CD4-positive, alpha-beta memory T cell (primary cell): ENCODE measurements at regions of chr17 and their contacts with region 1.

Region 1: DNA sequence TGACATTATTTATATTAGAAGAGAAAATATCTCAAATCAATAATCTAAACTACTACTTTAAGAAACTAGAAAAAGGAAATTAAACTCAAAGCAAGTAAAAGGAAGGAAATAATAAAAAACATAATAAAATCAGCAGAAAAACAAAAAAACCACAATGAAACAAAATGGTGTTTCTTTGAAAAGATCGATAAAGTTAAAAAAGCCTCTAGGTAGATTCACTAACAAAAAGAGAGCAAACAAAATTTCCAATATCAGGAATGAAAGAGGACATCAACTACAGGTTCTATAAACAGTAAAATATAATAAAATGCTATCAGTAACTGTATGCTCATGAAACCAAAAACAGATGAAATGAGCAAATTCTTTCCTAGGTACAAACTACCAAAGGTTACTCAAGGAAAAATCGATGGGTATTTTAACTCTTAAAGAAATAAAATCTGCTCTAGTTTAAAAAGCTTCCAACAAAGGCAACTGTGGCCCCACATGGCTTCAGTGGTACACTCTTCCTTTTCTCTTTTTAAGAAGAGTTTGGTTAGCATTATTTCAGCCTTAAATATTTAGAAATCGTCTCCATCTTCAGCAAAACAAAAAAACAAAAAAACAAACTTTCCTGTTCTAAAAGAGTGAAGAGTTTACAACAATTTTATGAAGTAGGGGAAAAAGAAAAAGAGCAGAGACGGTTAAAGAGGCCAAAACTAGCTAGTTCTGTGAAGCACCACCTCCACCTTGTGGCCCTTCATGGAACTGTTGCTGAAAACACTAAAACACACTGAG is 102.2 kb downstream of the TRIM37 start:
- DNase-seq: peak; percentile 57 to 68 (median 62)
- H3K4me3 ChIP-seq: no peak overlapping the region
- H3K4me3 Mint-ChIP-seq: peak overlapping the region in 2 of 8 donors; percentile 20 to 28
- H3K27ac ChIP-seq: no peak overlapping the region
- H3K27ac Mint-ChIP-seq: peak overlapping the region; percentile 49 to 91 (median 67)
- H3K4me1 ChIP-seq: peaks cover 6% of the 10 kb centered on the region
- H3K4me1 Mint-ChIP-seq: peaks cover 9 to 17% (median 13%) of the 10 kb centered on the region in 4 donors
- H3K27me3 ChIP-seq: no peaks in the 10 kb centered on the region
- H3K27me3 Mint-ChIP-seq: no peaks in the 10 kb centered on the region

Region 2: GRCh38 chr17:58200017-58200633 is 804.4 kb before region 1 on chr17:
- CTCF ChIA-PET with region 1: no interaction called
- POLR2A ChIA-PET with region 1: no interaction called
- intact Hi-C with region 1: loop called (anchors 2 kb)
- DNase-seq: peak in 4 of 5 donors; percentile 26 to 44 (median 39)
- H3K4me3 ChIP-seq: no peak overlapping the region
- H3K4me3 Mint-ChIP-seq: no peak overlapping the region
- H3K27ac ChIP-seq: no peak overlapping the region
- H3K27ac Mint-ChIP-seq: peak overlapping the region in 1 of 7 donors; percentile 63
- H3K4me1 ChIP-seq: no peaks in the 10 kb centered on the region
- H3K4me1 Mint-ChIP-seq: peaks cover 0 to 5% (median 1%) of the 10 kb centered on the region in 4 donors
- H3K27me3 ChIP-seq: no peaks in the 10 kb centered on the region
- H3K27me3 Mint-ChIP-seq: peaks cover 11 to 12% of the 10 kb centered on the region in 2 donors

Region 3: DNA sequence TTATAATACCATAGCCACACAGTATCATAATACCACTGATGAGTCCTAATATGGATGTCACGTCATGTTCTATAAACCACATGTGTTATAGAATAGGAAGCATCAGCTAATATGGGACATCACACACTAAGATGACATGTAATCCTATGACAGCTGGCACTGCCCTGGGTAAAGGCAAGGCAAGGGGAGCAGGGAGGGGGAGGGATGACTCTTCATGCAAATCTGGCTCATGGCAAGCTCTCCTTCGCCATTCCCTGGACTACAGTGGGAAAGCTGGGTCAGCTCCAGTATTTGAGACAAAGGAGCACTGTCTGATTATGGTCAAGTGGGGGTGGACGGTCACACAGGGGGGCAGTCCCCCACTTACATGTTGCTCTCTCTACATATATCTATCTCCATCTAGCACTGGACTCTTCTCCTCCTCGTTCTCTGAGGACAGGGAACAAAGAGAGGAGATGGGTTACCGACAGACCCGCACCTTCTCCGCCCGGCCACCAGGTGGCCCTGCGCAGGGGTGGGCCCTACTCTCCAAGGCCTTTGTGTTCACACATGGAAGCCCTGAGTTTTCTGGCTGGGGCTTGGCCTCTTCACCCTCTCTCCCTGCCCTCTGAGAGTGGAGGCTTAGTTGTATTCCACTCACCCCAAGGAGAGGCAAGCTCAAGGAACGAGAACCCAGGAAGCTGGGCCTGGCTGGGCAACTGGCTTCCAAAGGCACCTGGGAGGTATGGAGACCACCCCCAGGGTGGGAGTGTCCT is 700.4 kb before region 1 on chr17:
- CTCF ChIA-PET with region 1: no interaction called
- POLR2A ChIA-PET with region 1: no interaction called
- intact Hi-C with region 1: loop called (anchors 5 kb)
- DNase-seq: peak in 4 of 5 donors; percentile 59 to 65 (median 62)
- H3K4me3 ChIP-seq: no peak overlapping the region
- H3K4me3 Mint-ChIP-seq: no peak overlapping the region
- H3K27ac ChIP-seq: no peak overlapping the region
- H3K27ac Mint-ChIP-seq: peak overlapping the region in 4 of 7 donors; percentile 0 to 70 (median 44)
- H3K4me1 ChIP-seq: peaks cover 4% of the 10 kb centered on the region
- H3K4me1 Mint-ChIP-seq: peaks cover 4 to 10% (median 5%) of the 10 kb centered on the region in 4 donors
- H3K27me3 ChIP-seq: no peaks in the 10 kb centered on the region
- H3K27me3 Mint-ChIP-seq: no peaks in the 10 kb centered on the region

Region 4: GRCh38 chr17:58587702-58588254 is 416.7 kb before region 1 on chr17:
- CTCF ChIA-PET with region 1: interaction called, 50 read pairs
- POLR2A ChIA-PET with region 1: interaction called, 3 read pairs
- intact Hi-C with region 1: loop called (anchors 1 kb)
- DNase-seq: peak; percentile 46 to 54 (median 48)
- H3K4me3 ChIP-seq: no peak overlapping the region
- H3K4me3 Mint-ChIP-seq: no peak overlapping the region
- H3K27ac ChIP-seq: no peak overlapping the region
- H3K27ac Mint-ChIP-seq: no peak overlapping the region
- H3K4me1 ChIP-seq: no peaks in the 10 kb centered on the region
- H3K4me1 Mint-ChIP-seq: peaks cover 0 to 4% (median 2%) of the 10 kb centered on the region in 4 donors
- H3K27me3 ChIP-seq: no peaks in the 10 kb centered on the region
- H3K27me3 Mint-ChIP-seq: peaks cover 0 to 2% of the 10 kb centered on the region in 2 donors

Region 5: DNA sequence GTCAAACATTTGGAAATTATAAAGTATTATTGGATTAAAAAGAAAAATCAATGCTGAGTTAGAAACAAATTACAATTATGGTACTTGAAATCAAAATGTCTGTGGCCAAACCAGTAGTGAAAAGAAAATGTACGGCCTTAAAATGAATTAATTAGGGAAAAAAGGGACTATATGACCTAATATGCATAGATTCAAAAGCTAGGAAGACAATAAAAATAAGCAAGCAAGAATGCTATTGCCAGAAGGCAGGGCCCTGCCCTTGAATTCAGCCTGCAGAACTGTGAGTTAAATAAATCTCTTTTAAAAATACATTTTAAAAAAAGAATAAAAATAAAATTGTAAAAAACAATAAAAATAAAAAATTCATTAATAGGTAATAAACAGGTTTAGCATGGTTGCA is 13.5 kb after region 1 on chr17:
- CTCF ChIA-PET with region 1: interaction called, 10 read pairs
- POLR2A ChIA-PET with region 1: no interaction called
- intact Hi-C with region 1: no loop called
- DNase-seq: no peak
- H3K4me3 ChIP-seq: no peak overlapping the region
- H3K4me3 Mint-ChIP-seq: no peak overlapping the region
- H3K27ac ChIP-seq: no peak overlapping the region
- H3K27ac Mint-ChIP-seq: peak overlapping the region in 1 of 7 donors; percentile 55
- H3K4me1 ChIP-seq: no peaks in the 10 kb centered on the region
- H3K4me1 Mint-ChIP-seq: peaks cover 0 to 1% (median 0%) of the 10 kb centered on the region in 4 donors
- H3K27me3 ChIP-seq: no peaks in the 10 kb centered on the region
- H3K27me3 Mint-ChIP-seq: no peaks in the 10 kb centered on the region

Region 6: DNA sequence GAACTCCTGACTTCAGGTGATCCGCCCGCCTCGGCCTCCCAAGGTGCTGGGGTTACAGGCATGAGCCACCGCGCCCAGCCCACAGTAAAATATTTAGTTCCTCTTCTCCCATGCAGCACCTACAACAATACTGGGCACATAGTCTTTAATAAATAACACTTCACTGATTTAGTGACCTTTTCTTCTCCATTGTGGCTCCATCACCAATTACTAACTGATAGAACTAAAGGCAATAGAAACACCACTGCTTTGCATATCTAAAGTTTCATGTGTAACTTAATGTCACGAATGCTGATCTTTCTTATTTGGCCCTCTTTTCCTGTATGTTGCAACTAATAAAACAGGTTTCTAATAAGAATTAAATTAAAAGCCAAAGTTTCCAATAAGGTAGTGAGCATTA is 63.2 kb after region 1 on chr17:
- CTCF ChIA-PET with region 1: no interaction called
- POLR2A ChIA-PET with region 1: no interaction called
- intact Hi-C with region 1: no loop called
- DNase-seq: no peak
- H3K4me3 ChIP-seq: no peak overlapping the region
- H3K4me3 Mint-ChIP-seq: no peak overlapping the region
- H3K27ac ChIP-seq: no peak overlapping the region
- H3K27ac Mint-ChIP-seq: no peak overlapping the region
- H3K4me1 ChIP-seq: no peaks in the 10 kb centered on the region
- H3K4me1 Mint-ChIP-seq: peaks cover 0 to 2% (median under 1%) of the 10 kb centered on the region in 4 donors
- H3K27me3 ChIP-seq: no peaks in the 10 kb centered on the region
- H3K27me3 Mint-ChIP-seq: no peaks in the 10 kb centered on the region

Region 7: GRCh38 chr17:59266751-59267150 is 262.2 kb after region 1 on chr17:
- CTCF ChIA-PET with region 1: no interaction called
- POLR2A ChIA-PET with region 1: no interaction called
- intact Hi-C with region 1: no loop called
- DNase-seq: no peak
- H3K4me3 ChIP-seq: no peak overlapping the region
- H3K4me3 Mint-ChIP-seq: no peak overlapping the region
- H3K27ac ChIP-seq: no peak overlapping the region
- H3K27ac Mint-ChIP-seq: no peak overlapping the region
- H3K4me1 ChIP-seq: no peaks in the 10 kb centered on the region
- H3K4me1 Mint-ChIP-seq: no peaks in the 10 kb centered on the region
- H3K27me3 ChIP-seq: no peaks in the 10 kb centered on the region
- H3K27me3 Mint-ChIP-seq: no peaks in the 10 kb centered on the region